Sciatic nerve (tissue), 2 donors: ENCODE measurements at regions of chr9 and their contacts with region 1.

Region 1: DNA sequence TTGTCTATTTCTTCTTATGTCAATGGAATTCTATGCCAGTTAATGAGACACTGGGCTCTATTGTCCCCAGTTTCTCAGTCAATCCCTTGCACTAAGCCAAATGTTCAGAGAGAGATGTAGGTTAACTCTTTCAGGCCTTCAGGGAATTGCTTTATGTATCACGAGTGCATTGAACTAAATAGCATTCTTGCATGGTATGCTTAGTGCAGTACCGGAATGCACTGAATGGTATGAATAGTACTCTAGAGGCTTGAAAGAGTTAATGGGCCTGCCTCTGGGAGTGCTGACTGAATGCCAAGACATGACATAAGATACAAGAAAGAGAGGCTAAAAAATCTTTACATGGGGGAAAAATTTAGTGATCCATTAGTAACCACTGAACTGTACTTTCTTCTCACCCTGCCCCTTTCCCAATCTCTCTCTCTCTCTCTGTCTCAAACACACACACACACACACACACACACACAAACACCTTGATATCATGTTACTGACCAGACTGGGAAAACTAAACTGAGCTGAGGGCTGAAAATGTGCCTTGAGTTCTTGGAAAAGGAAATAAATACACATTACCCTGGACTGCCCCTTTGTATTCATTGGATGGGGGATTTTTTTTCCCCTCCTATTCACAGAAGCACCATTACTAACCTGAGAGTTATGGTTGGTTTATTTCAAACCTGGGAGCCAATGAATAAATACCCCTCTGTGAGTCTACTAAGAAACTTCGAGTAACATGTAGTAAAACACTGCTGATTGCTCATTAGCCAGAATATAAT is 35.4 kb upstream of the TMC1 start:
- DNase-seq: no peak
- ATAC-seq: peak; percentile 76

Region 2: DNA sequence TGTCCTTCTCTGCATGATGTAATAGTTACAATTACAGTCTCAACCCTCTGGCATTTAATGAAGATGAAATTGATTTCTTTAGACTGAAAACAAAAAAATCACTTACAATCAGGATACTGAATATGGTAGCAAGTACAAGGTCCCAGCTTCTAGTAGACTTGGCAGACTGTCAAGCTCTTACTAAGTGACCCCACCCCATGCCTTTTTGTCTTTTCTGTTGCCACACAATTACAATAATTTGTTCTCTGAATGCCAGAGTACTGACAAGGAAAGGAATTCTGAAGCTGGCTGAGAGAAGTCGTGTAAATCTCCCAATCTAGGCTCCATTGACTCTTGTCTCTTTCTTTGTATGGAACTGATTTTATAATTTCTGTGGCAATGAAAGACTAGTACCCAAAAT is 189.6 kb after region 1 on chr9:
- intact Hi-C with region 1: loop called (anchors 10 kb)
- DNase-seq: no peak
- ATAC-seq: no peak